ENCODE measurements at regions of chr10 and their contacts with region 1.

Region 1: DNA sequence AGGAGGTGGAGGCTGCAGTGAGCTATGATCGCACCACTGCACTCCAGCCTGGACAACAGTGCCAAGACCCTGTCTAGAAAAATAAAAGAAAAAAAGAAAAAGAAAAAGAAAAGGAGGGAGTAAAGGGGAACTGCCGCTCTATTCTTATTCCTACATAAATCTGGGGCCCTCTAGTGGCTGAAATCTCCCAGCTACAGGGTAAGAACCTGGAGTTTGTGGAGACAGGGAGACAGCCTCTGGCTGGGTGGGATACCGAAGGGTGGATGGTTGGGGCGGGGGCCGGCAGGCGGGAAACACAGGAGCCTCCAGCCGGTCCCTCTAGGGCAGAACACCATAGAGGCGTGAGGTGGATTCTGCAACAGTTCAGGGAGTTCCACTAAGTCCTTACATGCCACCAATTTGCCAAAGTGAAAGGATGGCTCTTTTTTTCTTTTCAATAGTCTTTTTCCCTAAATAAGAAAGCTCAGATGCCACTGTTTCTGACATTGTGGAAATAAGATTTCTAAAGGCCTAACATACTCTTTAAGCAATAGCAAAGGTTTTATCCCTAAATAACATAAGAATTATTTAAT is 117.3 kb downstream of the SVIL start:
- DNase-seq: peak; percentile 73
- H3K4me3 ChIP-seq: no peak overlapping the region
- H3K27ac ChIP-seq: no peak overlapping the region
- H3K4me1 ChIP-seq: peaks cover 9% of the 10 kb centered on the region
- H3K27me3 ChIP-seq: no peaks in the 10 kb centered on the region
- CTCF ChIP-seq: peak; percentile 86

Region 2: DNA sequence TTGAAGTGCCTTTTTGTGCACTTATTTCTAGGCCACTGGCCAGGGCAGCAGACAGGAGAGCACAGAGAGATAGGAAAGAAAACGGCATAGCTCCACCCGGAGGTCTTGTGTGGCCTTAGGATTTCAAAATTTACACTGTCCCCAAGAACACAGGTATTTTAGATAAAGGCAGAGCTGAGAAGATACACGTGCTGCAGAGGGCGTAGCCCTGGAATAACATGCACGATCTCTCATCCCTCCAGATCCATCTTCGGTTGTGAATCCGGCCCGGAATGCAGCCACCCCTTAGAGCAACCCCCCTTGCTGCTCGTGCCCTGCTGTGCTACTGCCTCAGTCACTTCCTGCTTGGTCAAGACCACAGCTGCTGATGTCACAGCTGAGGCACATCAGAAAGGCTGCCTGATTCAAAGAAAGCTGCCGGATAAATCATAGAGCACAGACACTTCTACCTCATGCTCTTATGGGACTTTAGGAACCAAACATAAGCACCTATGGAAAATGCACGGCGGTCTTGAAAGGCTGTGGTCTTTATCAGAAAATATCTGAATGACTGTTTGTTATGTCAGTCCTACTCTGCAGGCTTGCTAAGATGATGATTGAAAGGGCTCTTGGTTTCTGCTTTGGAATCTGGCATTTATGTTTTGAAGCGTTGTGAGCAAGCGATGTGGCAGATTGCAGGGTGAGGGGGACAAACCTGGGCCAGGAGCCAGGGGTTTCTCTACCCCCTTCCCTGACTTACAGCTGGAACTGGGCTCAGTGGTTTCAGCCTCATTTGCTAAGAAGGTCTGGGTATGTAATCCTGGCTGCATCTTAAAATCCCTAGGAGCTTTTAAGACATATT is 34.6 kb before region 1 on chr10:
- CTCF ChIA-PET with region 1: no interaction called
- POLR2A ChIA-PET with region 1: no interaction called
- intact Hi-C with region 1: loop called (anchors 1 kb)
- DNase-seq: peak; percentile 93
- H3K4me3 ChIP-seq: peak overlapping the region; percentile 25
- H3K27ac ChIP-seq: peak overlapping the region; percentile 98
- H3K4me1 ChIP-seq: peaks cover 71% of the 10 kb centered on the region
- H3K27me3 ChIP-seq: no peaks in the 10 kb centered on the region
- CTCF ChIP-seq: 0 out of 2 replicates have a peak, but pooled peaks have one; percentile 14

Region 3: GRCh38 chr10:29502351-29502750 is 15.1 kb before region 1 on chr10:
- CTCF ChIA-PET with region 1: no interaction called
- POLR2A ChIA-PET with region 1: no interaction called
- intact Hi-C with region 1: no loop called
- DNase-seq: no peak
- H3K4me3 ChIP-seq: no peak overlapping the region
- H3K27ac ChIP-seq: no peak overlapping the region
- H3K4me1 ChIP-seq: no peaks in the 10 kb centered on the region
- H3K27me3 ChIP-seq: no peaks in the 10 kb centered on the region
- CTCF ChIP-seq: no peak

Region 4: DNA sequence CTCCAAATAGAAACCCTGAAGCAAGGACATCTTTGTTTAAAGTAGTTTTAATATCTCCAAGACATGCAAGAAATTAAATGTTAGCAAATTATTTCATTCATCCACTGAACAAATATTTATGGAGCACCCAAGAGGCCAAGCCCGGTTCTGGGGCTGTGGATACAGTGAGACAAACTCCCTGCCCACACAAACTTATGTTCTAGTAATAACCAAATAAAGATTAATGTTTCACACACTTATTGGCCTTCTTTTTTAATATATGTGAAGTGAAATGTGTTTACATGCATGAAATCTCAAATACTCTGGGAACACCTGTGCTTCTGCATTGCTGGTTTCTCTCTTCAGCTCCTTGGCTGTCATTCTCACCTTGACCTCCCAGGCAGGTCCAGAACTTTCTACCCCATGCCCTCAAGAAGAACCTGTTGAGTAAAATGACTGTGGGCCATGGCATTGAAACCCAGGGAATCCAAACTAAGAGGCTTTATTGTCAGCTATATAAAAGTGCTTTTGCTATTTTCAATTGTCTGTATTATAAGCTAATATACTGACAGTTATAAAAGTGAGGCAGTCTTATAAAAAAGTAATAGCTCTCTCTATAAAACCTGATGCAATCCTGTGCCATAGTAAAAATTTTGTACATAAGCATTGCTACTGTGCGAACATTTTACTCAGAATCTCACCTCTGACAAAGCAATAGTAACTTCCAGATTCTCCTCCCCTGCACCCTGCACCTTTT is 73.6 kb after region 1 on chr10:
- CTCF ChIA-PET with region 1: no interaction called
- POLR2A ChIA-PET with region 1: no interaction called
- intact Hi-C with region 1: loop called (anchors 5 kb)
- DNase-seq: no peak
- H3K4me3 ChIP-seq: no peak overlapping the region
- H3K27ac ChIP-seq: peak overlapping the region; percentile 85
- H3K4me1 ChIP-seq: peaks cover 40% of the 10 kb centered on the region
- H3K27me3 ChIP-seq: no peaks in the 10 kb centered on the region
- CTCF ChIP-seq: no peak; the same call in 1 of the 2 replicates

Region 5: DNA sequence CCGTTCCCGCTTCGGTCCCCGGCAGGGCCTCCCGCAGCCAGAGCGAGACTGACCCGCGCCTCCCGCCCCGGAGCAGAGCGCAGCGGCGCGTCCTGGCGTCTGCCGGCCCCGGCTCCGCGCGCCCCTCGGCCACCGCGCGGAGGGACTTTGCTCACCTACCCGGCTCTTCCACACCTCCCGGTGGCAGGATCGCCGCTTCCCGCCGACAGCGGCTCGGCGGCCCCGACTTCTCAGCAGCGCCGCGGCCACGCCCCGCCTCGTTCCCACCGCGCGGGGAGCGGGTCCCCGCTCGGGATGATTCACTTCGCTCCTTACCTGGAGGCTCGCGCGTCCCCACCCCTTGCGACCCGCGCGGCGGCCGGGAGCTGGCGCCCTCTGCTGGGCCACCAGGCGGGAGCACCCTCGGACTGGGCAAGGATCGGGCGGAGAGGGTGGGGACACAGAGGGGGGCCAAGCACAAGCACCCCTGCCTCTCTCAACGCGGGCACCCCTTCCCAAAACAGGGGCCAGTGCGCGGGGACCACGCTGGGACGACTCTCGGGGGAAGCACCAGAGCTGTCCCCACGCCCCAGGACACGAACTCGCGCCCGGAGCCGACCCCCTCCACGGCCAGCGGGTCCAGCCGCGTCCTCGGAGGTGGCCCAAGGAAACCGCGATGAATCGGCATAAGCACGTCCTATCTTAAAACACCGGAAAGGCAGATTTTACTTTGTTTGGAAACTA is 218.3 kb after region 1 on chr10:
- CTCF ChIA-PET with region 1: interaction called, 3 read pairs
- POLR2A ChIA-PET with region 1: no interaction called
- intact Hi-C with region 1: loop called (anchors 10 kb)
- DNase-seq: peak; percentile 86
- H3K4me3 ChIP-seq: peak overlapping the region; percentile 86
- H3K27ac ChIP-seq: peak overlapping the region; percentile 75
- H3K4me1 ChIP-seq: no peaks in the 10 kb centered on the region
- H3K27me3 ChIP-seq: no peaks in the 10 kb centered on the region
- CTCF ChIP-seq: peak; percentile 95

Measured in A673 (cell line).